Calu3 (cell line): ENCODE measurements at regions of chr5 and their contacts with region 1.

Region 1: GRCh38 chr5:52657247-52657645 is 130.5 kb upstream of the ITGA1 start:
- DNase-seq: no peak
- H3K4me3 Mint-ChIP-seq: no peak overlapping the region
- H3K27ac Mint-ChIP-seq: no peak overlapping the region
- H3K4me1 Mint-ChIP-seq: no peaks in the 10 kb centered on the region
- H3K27me3 Mint-ChIP-seq: no peaks in the 10 kb centered on the region
- CTCF ChIP-seq: no peak

Region 2: GRCh38 chr5:52007230-52007858 is 649.9 kb before region 1 on chr5:
- CTCF ChIA-PET with region 1: no interaction called
- intact Hi-C with region 1: loop called (anchors 2 kb)
- DNase-seq: peak; percentile 54
- H3K4me3 Mint-ChIP-seq: peak overlapping the region; percentile 43
- H3K27ac Mint-ChIP-seq: no peak overlapping the region
- H3K4me1 Mint-ChIP-seq: peaks cover 15% of the 10 kb centered on the region
- H3K27me3 Mint-ChIP-seq: no peaks in the 10 kb centered on the region
- CTCF ChIP-seq: peak; percentile 56

Region 3: DNA sequence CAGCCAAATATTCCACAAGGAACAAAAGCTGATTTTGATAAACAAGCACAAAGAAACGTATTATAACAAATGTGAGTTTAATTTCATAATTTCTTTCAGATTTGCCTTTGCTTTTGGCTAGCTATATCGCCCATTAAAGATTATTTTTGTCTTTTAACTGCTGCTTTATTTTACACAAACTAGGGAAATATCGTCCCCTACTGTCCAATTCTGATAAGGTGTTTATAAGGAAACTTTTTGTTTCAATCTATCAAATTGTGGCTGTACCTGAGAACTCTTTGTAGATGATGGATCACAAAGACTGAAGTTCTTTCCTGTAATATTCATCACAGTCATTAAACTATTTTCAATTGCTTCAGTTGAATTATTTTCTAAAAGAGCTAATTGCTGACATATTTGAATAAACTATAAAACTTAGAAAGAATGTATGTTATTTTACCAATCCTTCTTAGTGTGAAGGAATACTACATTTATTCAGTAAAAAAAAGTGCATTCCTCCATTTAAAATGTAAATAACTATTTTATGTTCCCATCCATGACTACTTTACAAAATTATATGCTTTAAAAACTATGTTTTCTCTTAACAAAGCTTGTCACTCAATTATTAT is 300.8 kb before region 1 on chr5:
- CTCF ChIA-PET with region 1: no interaction called
- intact Hi-C with region 1: loop called (anchors 5 kb)
- DNase-seq: no peak
- H3K4me3 Mint-ChIP-seq: no peak overlapping the region
- H3K27ac Mint-ChIP-seq: no peak overlapping the region
- H3K4me1 Mint-ChIP-seq: no peaks in the 10 kb centered on the region
- H3K27me3 Mint-ChIP-seq: no peaks in the 10 kb centered on the region
- CTCF ChIP-seq: peak; percentile 59

Region 4: DNA sequence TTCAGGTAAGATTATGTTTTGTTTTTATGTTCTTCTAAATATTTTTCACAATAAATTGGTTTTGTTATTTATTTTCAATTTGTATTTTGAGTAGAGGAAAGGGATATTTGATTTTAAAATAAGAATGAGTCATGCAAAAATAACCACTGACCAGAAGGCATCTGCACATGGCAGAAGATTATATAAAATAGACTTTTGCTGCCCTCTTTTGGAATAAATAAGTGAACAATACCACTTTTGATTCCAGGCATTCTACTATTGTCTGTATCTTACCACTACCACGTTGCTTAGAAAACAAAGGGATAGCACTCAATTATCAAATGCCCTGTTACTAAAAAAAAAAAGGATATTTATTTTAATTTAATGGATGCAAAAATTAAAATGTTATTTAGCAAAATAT is 96.9 kb before region 1 on chr5:
- CTCF ChIA-PET with region 1: no interaction called
- intact Hi-C with region 1: loop called (anchors 2 kb)
- DNase-seq: no peak
- H3K4me3 Mint-ChIP-seq: no peak overlapping the region
- H3K27ac Mint-ChIP-seq: no peak overlapping the region
- H3K4me1 Mint-ChIP-seq: no peaks in the 10 kb centered on the region
- H3K27me3 Mint-ChIP-seq: no peaks in the 10 kb centered on the region
- CTCF ChIP-seq: peak; percentile 44

Region 5: GRCh38 chr5:52579391-52579790 is 77.9 kb before region 1 on chr5:
- CTCF ChIA-PET with region 1: no interaction called
- intact Hi-C with region 1: loop called (anchors 5 kb)
- DNase-seq: peak; percentile 59
- H3K4me3 Mint-ChIP-seq: peak overlapping the region; percentile 39
- H3K27ac Mint-ChIP-seq: peak overlapping the region; percentile 74
- H3K4me1 Mint-ChIP-seq: peaks cover 50% of the 10 kb centered on the region
- H3K27me3 Mint-ChIP-seq: no peaks in the 10 kb centered on the region
- CTCF ChIP-seq: no peak

Region 6: DNA sequence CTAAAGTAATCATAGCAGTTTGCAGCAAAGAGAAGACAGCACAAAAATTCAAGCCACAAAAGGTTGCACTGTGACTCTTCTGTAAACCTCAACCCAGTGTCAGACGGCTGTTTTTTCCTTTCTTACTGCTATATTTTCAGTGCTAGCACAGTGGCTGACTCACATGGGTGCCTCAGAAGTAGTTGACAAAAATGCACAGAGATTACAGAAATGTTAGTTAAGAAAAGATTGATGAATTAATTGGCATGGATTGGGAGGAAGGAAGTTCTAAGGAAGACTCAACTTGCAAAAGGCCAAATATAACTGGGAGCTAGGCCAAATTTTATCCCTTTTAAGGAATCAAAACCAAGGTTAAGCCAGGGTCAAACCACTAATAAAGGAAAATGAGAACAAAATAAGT is 86.7 kb after region 1 on chr5:
- CTCF ChIA-PET with region 1: no interaction called
- intact Hi-C with region 1: no loop called
- DNase-seq: no peak
- H3K4me3 Mint-ChIP-seq: no peak overlapping the region
- H3K27ac Mint-ChIP-seq: no peak overlapping the region
- H3K4me1 Mint-ChIP-seq: peaks cover 40% of the 10 kb centered on the region
- H3K27me3 Mint-ChIP-seq: no peaks in the 10 kb centered on the region
- CTCF ChIP-seq: no peak

Region 7: GRCh38 chr5:52783226-52783959 is 126.1 kb after region 1 on chr5:
- CTCF ChIA-PET with region 1: no interaction called
- intact Hi-C with region 1: no loop called
- DNase-seq: peak; percentile 49
- H3K4me3 Mint-ChIP-seq: no peak overlapping the region
- H3K27ac Mint-ChIP-seq: no peak overlapping the region
- H3K4me1 Mint-ChIP-seq: peaks cover 18% of the 10 kb centered on the region
- H3K27me3 Mint-ChIP-seq: no peaks in the 10 kb centered on the region
- CTCF ChIP-seq: no peak

Region 8: GRCh38 chr5:52989781-52990527 is 332.7 kb after region 1 on chr5:
- CTCF ChIA-PET with region 1: no interaction called
- intact Hi-C with region 1: no loop called
- DNase-seq: peak; percentile 46
- H3K4me3 Mint-ChIP-seq: peak overlapping the region; percentile 77
- H3K27ac Mint-ChIP-seq: peak overlapping the region; percentile 69
- H3K4me1 Mint-ChIP-seq: peaks cover 52% of the 10 kb centered on the region
- H3K27me3 Mint-ChIP-seq: no peaks in the 10 kb centered on the region
- CTCF ChIP-seq: no peak